ENCODE measurements at regions of chr11 and their contacts with region 1.

Region 1: GRCh38 chr11:73307323-73308002 is 613 bp upstream of the ARHGEF17 start:
- DNase-seq: peak; percentile 95
- ATAC-seq: peak; percentile 70
- H3K4me3 ChIP-seq: peak overlapping the region; percentile 59 to 77
- H3K27ac ChIP-seq: peak overlapping the region; percentile 92
- H3K4me1 ChIP-seq: peaks cover 13 to 34% of the 10 kb centered on the region in 2 experiments
- H3K27me3 ChIP-seq: no peaks in the 10 kb centered on the region
- CTCF ChIP-seq: peak; percentile 81 to 97 (median 89)
- POLR2A ChIP-seq: peak; percentile 40
- RAD21 ChIP-seq: peak; percentile 96

Region 2: GRCh38 chr11:73072901-73073481 is 234.5 kb before region 1 on chr11:
- CTCF ChIA-PET with region 1: no interaction called
- POLR2A ChIA-PET with region 1: no interaction called
- RAD21 ChIA-PET with region 1: no interaction called
- intact Hi-C with region 1: no loop called
- DNase-seq: no peak
- ATAC-seq: no peak
- H3K4me3 ChIP-seq: no peak overlapping the region
- H3K27ac ChIP-seq: no peak overlapping the region
- H3K4me1 ChIP-seq: no peaks in the 10 kb centered on the region
- H3K27me3 ChIP-seq: no peaks in the 10 kb centered on the region
- CTCF ChIP-seq: no peak
- POLR2A ChIP-seq: no peak
- RAD21 ChIP-seq: no peak

Region 3: GRCh38 chr11:73173755-73174494 is 133.5 kb before region 1 on chr11:
- CTCF ChIA-PET with region 1: no interaction called
- POLR2A ChIA-PET with region 1: no interaction called
- RAD21 ChIA-PET with region 1: no interaction called
- intact Hi-C with region 1: no loop called
- DNase-seq: no peak
- ATAC-seq: no peak
- H3K4me3 ChIP-seq: no peak overlapping the region
- H3K27ac ChIP-seq: no peak overlapping the region
- H3K4me1 ChIP-seq: peaks cover 0 to 11% of the 10 kb centered on the region in 2 experiments; a peak in 1 of 4 replicates
- H3K27me3 ChIP-seq: no peaks in the 10 kb centered on the region
- CTCF ChIP-seq: no peak
- POLR2A ChIP-seq: no peak
- RAD21 ChIP-seq: no peak

Region 4: DNA sequence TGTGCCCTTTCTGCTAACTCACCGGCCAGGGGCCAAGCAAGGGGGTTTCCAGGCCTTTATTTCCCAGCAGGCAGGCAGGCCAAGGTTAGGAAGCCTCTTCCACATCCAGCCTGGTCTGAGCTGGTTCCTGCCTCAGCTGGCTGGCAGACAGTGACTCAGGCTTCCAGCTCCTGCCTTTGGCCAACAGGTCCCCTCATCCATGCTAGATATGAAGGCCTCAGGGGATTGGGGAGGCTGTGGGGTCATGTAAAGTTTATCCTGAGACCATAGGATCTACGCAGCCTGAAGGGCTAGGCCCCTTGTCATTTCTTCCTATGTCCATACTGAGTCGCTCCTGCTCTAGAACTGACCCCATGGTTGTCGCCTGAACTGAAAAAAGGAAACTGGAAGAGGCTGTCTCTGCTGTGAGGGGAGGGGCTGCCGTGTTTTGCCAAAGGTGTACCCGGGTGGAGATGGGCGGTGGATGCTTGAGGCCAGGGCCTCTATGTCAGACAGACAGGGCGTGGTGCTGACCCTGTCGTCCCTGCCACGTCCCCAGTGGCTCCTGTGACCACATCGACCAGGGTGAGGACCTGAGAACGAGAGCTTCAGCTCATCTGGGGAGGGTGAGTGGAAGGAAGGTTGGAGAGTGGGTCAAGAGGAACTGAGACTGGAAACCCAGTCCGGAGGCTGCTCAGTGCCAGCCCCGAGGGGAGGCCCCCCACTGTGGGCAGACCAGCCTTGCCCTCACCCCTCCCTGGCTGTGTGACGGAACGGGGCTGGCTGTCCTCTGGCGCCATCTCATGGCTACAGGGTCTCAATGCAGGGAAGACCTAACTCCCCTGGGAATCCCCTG is 18.4 kb before region 1 on chr11:
- CTCF ChIA-PET with region 1: interaction called, 23 read pairs
- POLR2A ChIA-PET with region 1: no interaction called
- RAD21 ChIA-PET with region 1: no interaction called
- intact Hi-C with region 1: no loop called
- DNase-seq: peak; percentile 53
- ATAC-seq: peak; percentile 92
- H3K4me3 ChIP-seq: peak overlapping the region in 1 of 2 experiments; percentile 2; a peak in 1 of 4 replicates
- H3K27ac ChIP-seq: no peak overlapping the region; the same call in 1 of the 2 replicates
- H3K4me1 ChIP-seq: peaks cover 4 to 11% of the 10 kb centered on the region in 2 experiments; a peak in 2 of 4 replicates
- H3K27me3 ChIP-seq: no peaks in the 10 kb centered on the region; the same call in 1 of the 2 replicates
- CTCF ChIP-seq: peak; percentile 88 to 97 (median 95)
- POLR2A ChIP-seq: no peak
- RAD21 ChIP-seq: peak; percentile 98

Region 5: DNA sequence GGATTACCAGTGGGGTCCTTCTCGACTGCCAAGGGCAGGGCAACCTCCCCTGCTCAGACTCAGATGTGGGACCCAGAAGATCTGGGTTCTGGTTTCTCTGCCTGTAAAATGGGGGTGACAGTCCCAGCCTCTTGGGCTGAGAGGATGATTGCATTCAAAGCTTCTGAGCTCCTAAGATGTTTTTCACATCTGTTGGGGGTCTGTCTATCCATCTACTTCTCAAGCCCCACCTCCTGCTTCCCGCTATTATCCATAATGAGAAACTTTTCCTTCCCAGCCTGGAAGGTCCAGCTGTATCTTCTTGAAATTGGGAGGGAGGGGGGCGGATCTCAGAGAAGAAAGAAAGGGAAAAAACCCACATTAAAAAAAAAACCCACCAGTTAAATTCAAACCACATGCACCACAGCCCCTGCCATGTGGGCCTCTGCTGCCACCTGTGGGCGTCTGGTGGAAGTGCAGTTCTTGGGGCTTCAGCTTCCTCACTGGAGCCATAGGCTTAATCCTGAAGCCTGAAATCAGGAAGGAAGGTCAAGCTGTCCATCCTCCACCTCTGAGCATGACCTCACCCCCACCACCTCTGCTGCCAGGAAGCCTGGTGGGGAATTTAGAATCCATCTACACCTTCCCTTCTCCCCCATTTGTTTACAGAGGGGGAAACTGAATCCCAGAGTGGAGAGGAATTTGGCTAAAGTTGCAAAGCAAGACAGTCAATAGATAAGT is 27.9 kb after region 1 on chr11:
- CTCF ChIA-PET with region 1: interaction called, 77 read pairs
- POLR2A ChIA-PET with region 1: interaction called, 4 read pairs
- RAD21 ChIA-PET with region 1: interaction called, 7 to 12 read pairs
- intact Hi-C with region 1: loop called (anchors 1 kb)
- DNase-seq: peak; percentile 33
- ATAC-seq: peak; percentile 65
- H3K4me3 ChIP-seq: no peak overlapping the region
- H3K27ac ChIP-seq: peak overlapping the region; percentile 38; the same call in 1 of the 2 replicates
- H3K4me1 ChIP-seq: peaks cover 27 to 42% of the 10 kb centered on the region in 2 experiments
- H3K27me3 ChIP-seq: no peaks in the 10 kb centered on the region
- CTCF ChIP-seq: peak; percentile 95 to 98 (median 97)
- POLR2A ChIP-seq: no peak
- RAD21 ChIP-seq: peak; percentile 95

Region 6: GRCh38 chr11:73376160-73376802 is 68.8 kb after region 1 on chr11 and contains the start of gene RELT:
- CTCF ChIA-PET with region 1: interaction called, 3 read pairs
- POLR2A ChIA-PET with region 1: no interaction called
- RAD21 ChIA-PET with region 1: no interaction called
- intact Hi-C with region 1: loop called (anchors 5 kb)
- DNase-seq: peak; percentile 71
- ATAC-seq: peak; percentile 89
- H3K4me3 ChIP-seq: peak within 1 kb of the TSS; percentile 87 to 97
- H3K27ac ChIP-seq: peak within 1 kb of the TSS; percentile 88
- H3K4me1 ChIP-seq: peaks cover 6 to 27% of the 10 kb centered on the region in 2 experiments; a peak in 3 of 4 replicates
- H3K27me3 ChIP-seq: no peaks in the 10 kb centered on the region
- CTCF ChIP-seq: peak in 2 of 3 experiments; percentile 70 to 84; a peak in 5 of 6 replicates
- POLR2A ChIP-seq: peak; percentile 99
- RAD21 ChIP-seq: no peak
- total RNA-seq, gene RELT: 13.8 TPM

Region 7: DNA sequence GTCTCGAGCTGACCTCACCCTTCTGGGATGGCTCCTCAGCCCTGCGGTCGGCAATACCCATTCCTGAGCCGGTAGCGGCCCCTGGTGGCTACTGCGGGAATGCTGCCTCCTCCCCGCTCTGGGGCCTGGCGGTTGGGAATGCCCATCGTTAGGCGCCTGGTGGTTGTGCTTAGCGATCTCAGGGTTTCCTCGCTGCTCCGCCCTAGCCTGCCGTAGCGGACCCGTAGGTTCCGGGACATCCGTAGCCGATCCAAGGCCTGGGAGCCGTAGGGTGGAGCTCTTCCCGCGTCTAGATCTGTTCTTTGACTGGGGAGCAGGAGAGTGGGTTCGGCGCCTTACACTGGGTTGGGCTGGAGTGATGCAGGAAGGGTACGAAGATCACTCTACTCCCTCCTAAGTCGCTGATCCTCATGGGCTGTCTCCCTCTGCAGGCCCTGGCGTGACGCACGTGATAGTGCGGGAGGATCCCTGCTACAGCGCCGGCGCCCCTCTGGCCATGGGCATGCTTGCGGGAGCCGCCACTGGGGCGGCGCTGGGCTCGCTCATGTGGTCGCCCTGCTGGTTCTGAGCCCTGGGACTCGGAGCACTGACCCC is 353.7 kb after region 1 on chr11:
- CTCF ChIA-PET with region 1: interaction called, 5 read pairs
- POLR2A ChIA-PET with region 1: interaction called, 3 read pairs
- RAD21 ChIA-PET with region 1: no interaction called
- intact Hi-C with region 1: loop called (anchors 2 kb)
- DNase-seq: peak; percentile 43
- ATAC-seq: peak; percentile 96
- H3K4me3 ChIP-seq: no peak overlapping the region
- H3K27ac ChIP-seq: peak overlapping the region; percentile 12; the same call in 1 of the 2 replicates
- H3K4me1 ChIP-seq: peaks cover 5 to 20% of the 10 kb centered on the region in 2 experiments
- H3K27me3 ChIP-seq: no peaks in the 10 kb centered on the region
- CTCF ChIP-seq: peak; percentile 92 to 95 (median 92)
- POLR2A ChIP-seq: no peak
- RAD21 ChIP-seq: peak; percentile 99

Measured in HCT116 (cell line).